WTC11 (cell line): ENCODE measurements at regions of chr3 and their contacts with region 1.

Region 1: GRCh38 chr3:58188173-58188564 is 22.6 kb downstream of the DNASE1L3 start:
- DNase-seq: no peak
- ATAC-seq: no peak
- H3K4me3 Mint-ChIP-seq: no peak overlapping the region
- H3K27ac Mint-ChIP-seq: no peak overlapping the region; the same call in 1 of the 2 replicates
- H3K4me1 Mint-ChIP-seq: peaks cover 16% of the 10 kb centered on the region
- H3K27me3 Mint-ChIP-seq: no peaks in the 10 kb centered on the region
- CTCF ChIP-seq: no peak

Region 2: GRCh38 chr3:58200846-58201355 is 12.7 kb after region 1 on chr3:
- CTCF ChIA-PET with region 1: interaction called, 15 read pairs
- POLR2A ChIA-PET with region 1: no interaction called
- DNase-seq: no peak
- ATAC-seq: no peak
- H3K4me3 Mint-ChIP-seq: no peak overlapping the region
- H3K27ac Mint-ChIP-seq: no peak overlapping the region
- H3K4me1 Mint-ChIP-seq: no peaks in the 10 kb centered on the region
- H3K27me3 Mint-ChIP-seq: no peaks in the 10 kb centered on the region
- CTCF ChIP-seq: no peak

Region 3: GRCh38 chr3:58237238-58237940 is 49.2 kb after region 1 on chr3 and contains the start of gene ABHD6:
- CTCF ChIA-PET with region 1: interaction called, 13 read pairs
- POLR2A ChIA-PET with region 1: no interaction called
- DNase-seq: peak; percentile 79
- ATAC-seq: peak; percentile 72
- H3K4me3 Mint-ChIP-seq: peak within 1 kb of the TSS; percentile 89
- H3K27ac Mint-ChIP-seq: peak within 1 kb of the TSS; percentile 53; the same call in 1 of the 2 replicates
- H3K4me1 Mint-ChIP-seq: peaks cover 11% of the 10 kb centered on the region
- H3K27me3 Mint-ChIP-seq: peaks cover 58% of the 10 kb centered on the region
- CTCF ChIP-seq: no peak
- total RNA-seq, gene ABHD6: 5.4 to 6.5 TPM (median 6.3 TPM) in 3 replicates

Region 4: DNA sequence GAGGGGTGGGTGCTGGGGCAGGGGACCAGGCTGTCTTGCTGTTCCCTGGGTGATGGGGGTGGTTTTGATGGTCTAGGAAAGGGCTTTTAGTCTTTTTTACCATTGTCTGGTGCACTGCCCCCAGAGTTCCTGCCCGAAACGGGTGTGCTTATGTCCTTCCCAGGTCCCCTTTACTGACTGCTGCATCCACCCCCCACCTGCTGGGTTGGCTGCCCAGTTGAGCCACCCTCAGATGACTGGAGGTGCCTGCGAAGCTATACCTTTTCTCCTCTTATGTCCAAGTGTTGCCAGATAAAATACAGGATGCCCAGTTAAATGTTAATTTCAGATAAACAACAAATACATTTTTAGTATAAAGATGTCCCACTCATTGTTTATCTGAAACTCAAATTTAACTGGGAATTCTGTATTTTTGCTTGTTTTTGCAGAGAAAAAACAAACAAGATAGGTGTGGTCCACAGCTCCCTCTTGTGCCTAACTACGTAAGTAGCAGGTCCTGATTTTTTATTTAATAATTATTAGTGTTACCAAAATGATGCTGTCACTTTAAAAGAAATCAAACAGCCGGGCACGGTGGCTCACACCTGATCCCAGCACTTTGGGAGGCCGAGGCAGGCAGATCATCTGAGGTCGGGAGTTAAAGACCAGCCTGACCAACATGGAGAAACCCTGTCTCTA is 111.8 kb after region 1 on chr3:
- CTCF ChIA-PET with region 1: interaction called, 126 read pairs
- POLR2A ChIA-PET with region 1: interaction called, 4 read pairs
- DNase-seq: no peak
- ATAC-seq: peak; percentile 65
- H3K4me3 Mint-ChIP-seq: no peak overlapping the region
- H3K27ac Mint-ChIP-seq: no peak overlapping the region
- H3K4me1 Mint-ChIP-seq: peaks cover 9% of the 10 kb centered on the region
- H3K27me3 Mint-ChIP-seq: peaks cover 14% of the 10 kb centered on the region
- CTCF ChIP-seq: peak; percentile 48; the same call in 1 of the 2 replicates